CD14-positive monocyte (primary cell): ENCODE measurements at regions of chr18 and their contacts with region 1.

Region 1: DNA sequence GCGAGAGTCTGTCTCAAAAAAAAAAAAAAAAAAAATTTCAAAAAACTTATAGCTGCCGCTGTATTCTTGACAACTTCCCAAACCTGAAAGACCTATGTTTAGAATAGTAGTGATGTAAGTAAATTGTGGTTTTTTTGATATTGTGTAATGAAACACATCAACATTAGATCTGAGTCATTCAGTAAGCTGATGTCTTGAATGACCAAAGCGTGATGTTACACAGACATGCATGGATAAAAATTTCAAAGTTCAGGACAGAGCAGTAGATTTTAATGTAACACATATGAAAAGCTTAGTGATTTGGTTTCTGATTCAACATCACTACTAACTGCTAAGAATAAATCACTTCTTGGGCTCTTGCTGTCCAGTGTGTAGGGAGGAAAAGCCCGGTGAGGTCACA is 69.3 kb upstream of the MEX3C start:
- DNase-seq: peak; percentile 41 to 80 (median 71)
- H3K4me3 ChIP-seq: no peak overlapping the region
- H3K4me3 Mint-ChIP-seq: no peak overlapping the region
- H3K27ac ChIP-seq: no peak overlapping the region
- H3K27ac Mint-ChIP-seq: peak overlapping the region in 1 of 7 donors; percentile 41
- H3K4me1 ChIP-seq: peaks cover 5 to 8% of the 10 kb centered on the region in 2 donors
- H3K4me1 Mint-ChIP-seq: peaks cover 7% of the 10 kb centered on the region
- H3K27me3 ChIP-seq: no peaks in the 10 kb centered on the region
- H3K27me3 Mint-ChIP-seq: peaks cover 7 to 10% (median 8%) of the 10 kb centered on the region in 3 donors
- CTCF ChIP-seq: no peak

Region 2: GRCh38 chr18:51211552-51211951 is 55.2 kb before region 1 on chr18:
- intact Hi-C with region 1: loop called in 1 of 2 experiments (anchors 1 kb)
- DNase-seq: peak; percentile 95 to 98 (median 96)
- H3K4me3 ChIP-seq: peak overlapping the region in 1 of 3 experiments; percentile 40
- H3K4me3 Mint-ChIP-seq: peak overlapping the region in 1 of 2 donors; percentile 47
- H3K27ac ChIP-seq: peak overlapping the region; percentile 48 to 81
- H3K27ac Mint-ChIP-seq: peak overlapping the region; percentile 85 to 97 (median 93)
- H3K4me1 ChIP-seq: peaks cover 24 to 38% of the 10 kb centered on the region in 2 donors
- H3K4me1 Mint-ChIP-seq: peaks cover 36% of the 10 kb centered on the region
- H3K27me3 ChIP-seq: no peaks in the 10 kb centered on the region
- H3K27me3 Mint-ChIP-seq: peaks cover 0 to 11% (median 2%) of the 10 kb centered on the region in 3 donors
- CTCF ChIP-seq: no peak

Region 3: GRCh38 chr18:51400721-51401120 is 133.9 kb after region 1 on chr18:
- intact Hi-C with region 1: no loop called
- DNase-seq: no peak
- H3K4me3 ChIP-seq: no peak overlapping the region
- H3K4me3 Mint-ChIP-seq: no peak overlapping the region
- H3K27ac ChIP-seq: no peak overlapping the region
- H3K27ac Mint-ChIP-seq: no peak overlapping the region
- H3K4me1 ChIP-seq: no peaks in the 10 kb centered on the region
- H3K4me1 Mint-ChIP-seq: no peaks in the 10 kb centered on the region
- H3K27me3 ChIP-seq: no peaks in the 10 kb centered on the region
- H3K27me3 Mint-ChIP-seq: peaks cover 0 to 1% (median 0%) of the 10 kb centered on the region in 3 donors
- CTCF ChIP-seq: no peak